GM10248 (cell line): ENCODE measurements at regions of chr4 and their contacts with region 1.

Region 1: GRCh38 chr4:129783596-129783995 is 687.6 kb downstream of the C4orf33 start:
- DNase-seq: no peak
- CTCF ChIP-seq: no peak

Region 2: GRCh38 chr4:129474698-129475097 is 308.9 kb before region 1 on chr4:
- CTCF ChIA-PET with region 1: no interaction called
- POLR2A ChIA-PET with region 1: no interaction called
- DNase-seq: no peak
- CTCF ChIP-seq: no peak

Region 3: DNA sequence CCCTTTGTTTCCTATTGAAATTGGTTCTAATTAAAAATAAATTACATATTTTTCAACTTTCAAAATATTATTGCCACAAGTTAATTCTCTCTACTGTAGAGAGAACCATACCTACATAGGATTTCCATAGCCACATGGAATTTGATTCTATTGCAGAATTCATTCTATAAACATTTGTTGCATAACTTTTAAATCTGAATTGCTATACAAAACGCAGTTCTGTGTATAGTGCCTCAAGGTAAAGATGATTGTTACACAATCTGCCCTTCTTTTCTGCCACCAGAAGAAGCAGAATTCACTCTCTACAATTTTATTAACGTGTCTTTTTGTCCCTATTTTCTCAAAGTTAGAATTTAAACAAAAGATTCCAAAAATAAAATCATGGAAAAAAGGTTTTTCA is 14.2 kb before region 1 on chr4:
- CTCF ChIA-PET with region 1: interaction called, 17 read pairs
- POLR2A ChIA-PET with region 1: no interaction called
- DNase-seq: no peak
- CTCF ChIP-seq: no peak

Region 4: GRCh38 chr4:131118518-131118917 is 1334.9 kb after region 1 on chr4:
- CTCF ChIA-PET with region 1: no interaction called
- POLR2A ChIA-PET with region 1: no interaction called
- DNase-seq: no peak
- CTCF ChIP-seq: no peak